K562 (cell line): ENCODE measurements at regions of chr22 and their contacts with region 1.

Region 1: DNA sequence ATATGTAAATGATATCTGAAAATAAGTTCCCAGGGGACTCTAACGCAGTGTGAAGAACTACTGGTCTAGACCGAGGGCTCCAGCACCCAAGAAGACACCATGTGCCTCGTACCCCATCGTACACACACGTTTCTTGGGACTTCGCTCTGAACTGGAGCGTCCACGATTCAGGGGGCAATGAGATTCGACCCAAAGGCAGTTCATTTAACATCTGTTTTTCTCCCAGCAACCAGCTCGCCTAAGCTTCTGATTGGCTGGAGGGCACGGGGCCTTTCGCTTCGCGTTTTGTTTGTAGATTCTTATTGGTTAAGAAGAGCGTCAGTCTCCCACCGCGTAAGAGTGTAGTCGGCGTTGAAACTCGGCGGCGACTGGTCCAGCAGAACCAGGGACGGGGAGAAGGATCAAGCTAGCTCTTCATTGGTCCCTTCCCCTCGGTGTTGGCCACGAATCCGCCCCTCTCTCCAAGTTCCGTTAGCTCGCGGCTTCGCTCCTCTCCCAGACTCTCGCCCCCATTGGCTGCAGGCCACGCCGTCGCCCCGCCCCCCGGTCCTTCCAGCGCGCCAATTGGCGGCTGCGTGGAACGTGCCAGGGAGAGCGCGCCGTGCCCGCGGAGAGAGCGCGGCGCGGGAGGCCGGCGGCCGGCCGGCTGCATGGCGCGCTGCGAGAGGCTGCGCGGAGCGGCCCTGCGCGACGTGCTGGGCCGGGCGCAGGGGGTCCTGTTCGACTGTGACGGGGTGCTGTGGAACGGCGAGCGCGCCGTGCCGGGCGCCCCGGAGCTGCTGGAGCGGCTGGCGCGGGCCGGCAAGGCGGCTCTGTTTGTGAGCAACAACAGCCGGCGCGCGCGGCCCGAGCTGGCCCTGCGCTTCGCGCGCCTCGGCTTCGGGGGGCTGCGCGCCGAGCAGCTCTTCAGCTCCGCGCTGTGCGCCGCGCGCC is at the start of gene PDXP:
- DNase-seq: peak; percentile 89 to 98 (median 94)
- ATAC-seq: peak; percentile 96
- H3K4me3 ChIP-seq: peak within 1 kb of the TSS; percentile 63
- H3K27ac ChIP-seq: peak within 1 kb of the TSS; percentile 88
- H3K4me1 ChIP-seq: peaks cover 20 to 27% of the 10 kb centered on the region in 2 experiments
- H3K27me3 ChIP-seq: no peaks in the 10 kb centered on the region
- CTCF ChIP-seq: no peak
- EP300 ChIP-seq: no peak
- POLR2A ChIP-seq: peak; percentile 70
- RAD21 ChIP-seq: no peak
- polyA plus RNA-seq, gene PDXP: 7.9 to 11.8 TPM

Region 2: GRCh38 chr22:37643225-37643847 is 15.1 kb before region 1 on chr22:
- CTCF ChIA-PET with region 1: no interaction called
- POLR2A ChIA-PET with region 1: interaction called, 14 read pairs
- in situ Hi-C with region 1: no loop called
- intact Hi-C with region 1: no loop called
- DNase-seq: peak; percentile 58 to 76 (median 68)
- ATAC-seq: peak; percentile 88
- H3K4me3 ChIP-seq: no peak overlapping the region
- H3K27ac ChIP-seq: no peak overlapping the region; the same call in 2 of the 3 replicates
- H3K4me1 ChIP-seq: peaks cover 10 to 51% of the 10 kb centered on the region in 2 experiments; a peak in 4 of 5 replicates
- H3K27me3 ChIP-seq: no peaks in the 10 kb centered on the region
- CTCF ChIP-seq: peak; percentile 78 to 85 (median 81)
- EP300 ChIP-seq: no peak
- POLR2A ChIP-seq: no peak
- RAD21 ChIP-seq: peak; percentile 53 to 67

Region 3: DNA sequence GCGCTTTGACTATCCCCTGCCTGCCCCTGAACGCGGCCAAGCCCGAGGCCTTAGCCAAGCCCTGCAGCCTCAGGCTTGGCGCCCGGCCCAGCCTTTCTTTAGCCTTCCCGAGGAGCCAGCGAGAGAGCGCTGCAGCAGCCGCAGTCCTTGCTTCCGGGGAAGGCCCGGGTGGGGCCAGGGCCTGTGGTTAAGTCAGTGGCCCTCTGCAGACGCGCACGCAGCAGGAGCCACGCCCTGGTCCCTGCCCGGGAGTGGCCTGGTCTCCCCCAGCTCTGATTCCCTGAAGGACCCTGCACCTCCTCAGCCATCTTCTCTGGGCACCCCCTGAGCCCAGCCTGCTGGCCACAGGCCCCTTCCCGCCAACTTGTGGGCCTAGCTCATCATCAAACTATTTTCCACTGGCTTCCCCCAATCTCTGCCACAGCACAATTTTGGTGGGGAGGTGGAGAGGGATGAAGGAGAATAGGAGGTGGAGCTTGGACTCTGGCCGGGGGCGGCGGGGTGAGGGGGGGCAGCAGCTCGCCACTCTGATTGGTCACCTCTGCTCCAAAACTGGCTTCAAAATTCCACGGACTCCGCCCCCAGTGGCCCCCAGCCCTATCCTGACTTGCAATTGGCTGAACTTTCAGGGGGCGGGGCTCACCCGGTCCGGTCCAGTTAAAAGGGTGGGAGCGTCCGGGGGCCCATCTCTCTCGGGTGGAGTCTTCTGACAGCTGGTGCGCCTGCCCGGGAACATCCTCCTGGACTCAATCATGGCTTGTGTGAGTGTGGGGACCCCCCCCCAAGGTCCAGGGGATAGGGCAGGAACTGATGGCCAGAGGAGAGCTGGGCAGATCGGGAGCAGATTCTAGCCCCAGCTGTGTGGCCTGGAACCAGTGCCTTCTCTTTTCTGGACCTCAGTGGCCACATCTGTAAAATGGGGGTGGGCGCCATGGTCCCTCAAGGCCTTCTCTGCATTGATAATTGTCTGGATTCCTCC is 16.8 kb after region 1 on chr22 and contains the start of gene LGALS1:
- CTCF ChIA-PET with region 1: no interaction called
- POLR2A ChIA-PET with region 1: interaction called, 12 read pairs
- in situ Hi-C with region 1: no loop called
- intact Hi-C with region 1: no loop called
- DNase-seq: peak; percentile 90 to 95 (median 91)
- ATAC-seq: peak; percentile 93
- H3K4me3 ChIP-seq: peak within 1 kb of the TSS; percentile 52
- H3K27ac ChIP-seq: peak within 1 kb of the TSS; percentile 85
- H3K4me1 ChIP-seq: peaks cover 2 to 57% of the 10 kb centered on the region in 2 experiments; a peak in 3 of 5 replicates
- H3K27me3 ChIP-seq: no peaks in the 10 kb centered on the region
- CTCF ChIP-seq: peak in 1 of 3 experiments; percentile 29; a peak in 1 of 6 replicates
- EP300 ChIP-seq: no peak
- POLR2A ChIP-seq: peak; percentile 74
- RAD21 ChIP-seq: peak in 1 of 2 experiments; percentile 28; a peak in 1 of 4 replicates
- polyA plus RNA-seq, gene LGALS1: 240 to 301 TPM

Region 4: GRCh38 chr22:37686002-37686982 is 27.9 kb after region 1 on chr22 and contains the start of gene NOL12:
- CTCF ChIA-PET with region 1: interaction called, 9 read pairs
- POLR2A ChIA-PET with region 1: interaction called, 3 read pairs
- in situ Hi-C with region 1: no loop called
- intact Hi-C with region 1: loop called (anchors 1 kb)
- DNase-seq: peak; percentile 79 to 89 (median 86)
- ATAC-seq: peak; percentile 91
- H3K4me3 ChIP-seq: peak within 1 kb of the TSS; percentile 77
- H3K27ac ChIP-seq: peak within 1 kb of the TSS; percentile 79
- H3K4me1 ChIP-seq: peaks cover 8 to 19% of the 10 kb centered on the region in 2 experiments; a peak in 4 of 5 replicates
- H3K27me3 ChIP-seq: no peaks in the 10 kb centered on the region
- CTCF ChIP-seq: no peak
- EP300 ChIP-seq: no peak
- POLR2A ChIP-seq: peak; percentile 81
- RAD21 ChIP-seq: no peak
- polyA plus RNA-seq, gene NOL12: 2.8 to 10.5 TPM